Stomach (tissue), 19 donors: ENCODE measurements at regions of chr3 and their contacts with region 1.

Region 1: GRCh38 chr3:124995460-124995994 is 60.3 kb downstream of the HEG1 start:
- DNase-seq: peak; percentile 55 to 88
- H3K4me3 ChIP-seq: no peak overlapping the region
- H3K27ac ChIP-seq: peak overlapping the region in 4 of 5 donors; percentile 3 to 51 (median 17)
- H3K4me1 ChIP-seq: peaks cover 13 to 37% (median 25%) of the 10 kb centered on the region in 4 donors
- H3K27me3 ChIP-seq: no peaks in the 10 kb centered on the region
- CTCF ChIP-seq: peak in 4 of 7 experiments; percentile 44 to 68 (median 56)
- EP300 ChIP-seq: no peak
- POLR2A ChIP-seq: no peak

Region 2: DNA sequence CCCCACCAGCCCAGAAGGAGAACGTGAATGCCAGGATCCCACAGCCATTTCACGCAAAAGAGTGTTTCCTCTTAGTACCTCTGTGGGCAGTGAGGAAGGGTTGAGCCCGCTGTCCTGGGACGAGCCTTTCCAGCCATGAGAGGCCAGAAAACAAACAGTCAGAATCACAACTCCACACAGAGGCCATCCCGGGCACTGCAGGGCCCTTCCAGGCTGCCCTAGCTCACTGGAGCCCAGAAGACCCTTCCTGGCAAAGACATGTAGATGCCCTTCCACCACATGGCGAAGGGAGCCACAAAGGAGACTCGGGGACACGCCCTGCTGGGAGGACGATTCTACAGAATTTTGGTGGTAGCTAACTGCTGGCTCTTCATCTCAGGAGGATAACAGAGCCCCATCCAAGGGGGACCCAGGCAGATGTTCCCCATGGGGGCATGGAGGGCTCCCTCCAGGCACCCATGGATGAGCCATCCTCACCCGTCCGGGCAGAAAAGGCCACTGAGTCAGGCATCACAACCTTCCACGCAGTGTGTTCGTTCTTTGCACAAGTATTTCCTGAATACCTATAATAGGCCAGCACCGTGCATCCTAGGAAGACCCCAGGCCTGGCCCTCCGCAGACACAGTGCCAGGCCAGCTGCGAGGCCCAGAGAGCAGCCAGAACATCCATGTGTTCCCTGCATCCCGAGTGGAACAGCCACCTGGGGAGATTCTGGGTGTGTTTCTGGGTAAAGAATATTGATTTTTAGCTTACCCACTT is 169.8 kb after region 1 on chr3:
- intact Hi-C with region 1: loop called (anchors 5 kb)
- DNase-seq: peak in 1 of 2 donors; percentile 57
- H3K4me3 ChIP-seq: no peak overlapping the region
- H3K27ac ChIP-seq: peak overlapping the region; percentile 63 to 91 (median 71)
- H3K4me1 ChIP-seq: peaks cover 25 to 49% (median 36%) of the 10 kb centered on the region in 4 donors
- H3K27me3 ChIP-seq: no peaks in the 10 kb centered on the region
- CTCF ChIP-seq: peak in 4 of 7 experiments; percentile 39 to 61 (median 48)
- EP300 ChIP-seq: no peak
- POLR2A ChIP-seq: no peak